Left lung (tissue), 14 donors: ENCODE measurements at regions of chr7 and their contacts with region 1.

Region 1: GRCh38 chr7:55271069-55271626 is 94.0 kb upstream of the LANCL2 start:
- DNase-seq: no peak
- ATAC-seq: no peak
- H3K4me3 ChIP-seq: no peak overlapping the region
- H3K27ac ChIP-seq: no peak overlapping the region
- H3K4me1 ChIP-seq: no peaks in the 10 kb centered on the region
- H3K27me3 ChIP-seq: no peaks in the 10 kb centered on the region
- CTCF ChIP-seq: no peak

Region 2: DNA sequence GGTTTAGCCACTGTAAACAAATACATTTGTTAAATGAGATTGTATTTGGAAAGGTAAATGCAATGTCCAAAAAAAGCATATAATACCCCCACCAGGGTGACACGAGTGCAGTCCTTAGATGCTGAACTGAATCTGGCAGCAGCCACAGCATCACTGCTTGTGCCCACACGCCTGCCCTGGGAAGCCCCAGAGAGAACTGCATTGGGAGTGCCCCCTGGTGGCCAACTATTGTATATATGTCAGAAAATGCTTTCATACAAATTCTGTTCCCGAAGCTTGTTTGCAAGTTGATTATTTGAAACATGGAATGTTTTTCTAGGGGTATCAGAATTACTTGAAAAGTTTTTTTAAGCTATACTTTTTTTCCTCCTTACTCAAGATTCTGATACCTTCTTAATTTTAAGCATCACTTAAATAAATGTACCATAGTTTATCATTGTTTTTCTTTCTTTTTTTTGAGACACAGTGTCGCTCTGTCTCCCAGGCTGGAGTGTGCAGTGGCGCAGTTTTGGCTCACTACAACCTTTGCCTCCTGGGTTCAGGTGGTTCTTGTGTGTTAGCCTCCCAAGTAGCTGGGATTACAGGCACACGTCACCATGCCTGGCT is 144.1 kb after region 1 on chr7:
- intact Hi-C with region 1: loop called in 1 of 2 experiments (anchors 10 kb)
- DNase-seq: peak in 3 of 4 donors; percentile 60 to 81 (median 70)
- ATAC-seq: peak; percentile 96
- H3K4me3 ChIP-seq: no peak overlapping the region
- H3K27ac ChIP-seq: no peak overlapping the region
- H3K4me1 ChIP-seq: no peaks in the 10 kb centered on the region
- H3K27me3 ChIP-seq: no peaks in the 10 kb centered on the region
- CTCF ChIP-seq: peak; percentile 62 to 93

Region 3: GRCh38 chr7:55593515-55594318 is 322.6 kb after region 1 on chr7:
- intact Hi-C with region 1: loop called in 1 of 2 experiments (anchors 10 kb)
- DNase-seq: peak in 3 of 4 donors; percentile 32 to 93 (median 60)
- ATAC-seq: peak; percentile 69
- H3K4me3 ChIP-seq: no peak overlapping the region
- H3K27ac ChIP-seq: no peak overlapping the region
- H3K4me1 ChIP-seq: peaks cover 0 to 12% of the 10 kb centered on the region in 2 donors
- H3K27me3 ChIP-seq: no peaks in the 10 kb centered on the region
- CTCF ChIP-seq: peak; percentile 69 to 86